SK-MEL-5 (cell line): ENCODE measurements at regions of chr11 and their contacts with region 1.

Region 1: DNA sequence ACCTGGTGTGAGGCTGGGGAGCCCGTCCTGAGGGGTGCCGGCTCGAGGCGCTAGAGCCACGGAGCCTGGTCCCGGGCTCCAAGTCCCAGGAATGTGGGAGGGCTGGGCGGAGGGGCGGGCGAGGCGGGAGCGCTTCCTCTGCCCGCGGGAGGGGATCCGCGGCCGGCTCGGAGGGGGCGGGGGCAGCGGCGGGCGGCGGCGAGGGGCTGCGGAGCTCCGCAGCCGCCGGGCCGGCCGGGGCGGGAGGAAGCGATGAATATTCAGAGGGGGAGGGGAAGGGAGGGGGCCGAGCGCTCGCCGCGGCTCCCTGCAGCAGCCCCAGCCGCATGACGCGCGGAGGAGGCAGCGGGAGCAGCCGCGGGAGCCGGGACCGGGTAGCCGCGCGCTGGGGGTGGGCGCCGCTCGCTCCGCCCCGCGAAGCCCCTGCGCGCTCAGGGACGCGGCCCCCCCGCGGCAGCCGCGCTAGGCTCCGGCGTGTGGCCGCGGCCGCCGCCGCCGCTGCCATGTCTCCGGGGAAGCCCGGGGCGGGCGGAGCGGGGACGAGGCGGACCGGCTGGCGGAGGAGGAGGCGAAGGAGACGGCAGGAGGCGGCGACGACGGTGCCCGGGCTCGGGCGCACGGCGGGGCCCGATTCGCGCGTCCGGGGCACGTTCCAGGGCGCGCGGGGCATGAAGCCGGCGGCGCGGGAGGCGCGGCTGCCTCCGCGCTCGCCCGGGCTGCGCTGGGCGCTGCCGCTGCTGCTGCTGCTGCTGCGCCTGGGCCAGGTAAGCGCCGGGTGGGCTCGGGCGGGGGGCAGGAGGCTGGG is at the start of gene PTPRJ:
- DNase-seq: peak; percentile 56
- total RNA-seq, gene PTPRJ: 39.4 and 40.1 TPM in 2 replicates

Region 2: GRCh38 chr11:47616726-47617416 is 363.6 kb before region 1 on chr11:
- in situ Hi-C with region 1: no loop called
- DNase-seq: peak; percentile 80

Region 3: GRCh38 chr11:48109046-48109666 is 128.7 kb after region 1 on chr11:
- in situ Hi-C with region 1: loop called (anchors 25 kb)
- DNase-seq: peak; percentile 79